Activated CD4-positive, alpha-beta T cell treated with anti-CD3 and anti-CD28 coated beads for 36 hours (primary cell): ENCODE measurements at regions of chr7 and their contacts with region 1.

Region 1: DNA sequence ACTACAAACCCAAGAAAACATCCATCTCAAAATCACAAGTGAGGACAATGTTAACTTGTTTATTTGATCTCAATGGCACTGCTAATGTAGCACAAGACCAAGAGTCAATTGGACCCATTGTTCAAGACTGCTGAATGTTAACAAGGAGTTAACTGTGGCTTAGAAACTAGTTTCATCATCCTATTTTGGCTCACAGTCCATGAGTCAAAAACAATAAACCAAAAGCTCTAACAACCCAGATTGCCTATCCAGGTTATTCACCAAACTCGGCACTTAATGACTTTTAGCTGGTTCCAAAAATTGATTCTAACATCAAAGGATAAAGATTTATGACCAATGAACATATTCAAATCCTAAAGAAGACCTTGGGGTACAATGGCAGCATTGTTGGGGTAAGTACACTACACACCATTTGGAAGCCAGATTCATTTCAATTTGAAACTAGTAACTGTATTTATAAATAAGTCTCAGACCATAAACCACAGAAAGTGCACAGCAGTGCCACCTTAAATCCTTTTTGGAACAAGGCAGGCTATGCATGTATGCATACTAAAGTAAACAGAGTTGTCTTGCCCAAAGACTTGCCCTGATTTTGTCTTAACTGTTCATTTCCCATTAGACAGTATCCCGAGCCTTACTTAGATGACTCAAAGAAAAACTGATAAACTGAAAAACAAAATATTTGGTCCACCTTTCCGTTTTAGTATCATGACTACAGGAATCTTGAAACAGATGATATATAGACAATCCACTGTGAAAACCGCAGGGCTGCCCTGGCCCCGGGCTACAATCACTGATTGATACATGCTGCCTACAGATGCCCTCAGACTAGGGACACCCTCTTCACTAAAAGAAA is 84.5 kb downstream of the SRPK2 start:
- DNase-seq: peak; percentile 37
- ATAC-seq: peak; percentile 31
- H3K4me3 Mint-ChIP-seq: no peak overlapping the region
- H3K27ac Mint-ChIP-seq: peak overlapping the region; percentile 40
- H3K4me1 Mint-ChIP-seq: peaks cover 70% of the 10 kb centered on the region
- H3K27me3 Mint-ChIP-seq: no peaks in the 10 kb centered on the region

Region 2: DNA sequence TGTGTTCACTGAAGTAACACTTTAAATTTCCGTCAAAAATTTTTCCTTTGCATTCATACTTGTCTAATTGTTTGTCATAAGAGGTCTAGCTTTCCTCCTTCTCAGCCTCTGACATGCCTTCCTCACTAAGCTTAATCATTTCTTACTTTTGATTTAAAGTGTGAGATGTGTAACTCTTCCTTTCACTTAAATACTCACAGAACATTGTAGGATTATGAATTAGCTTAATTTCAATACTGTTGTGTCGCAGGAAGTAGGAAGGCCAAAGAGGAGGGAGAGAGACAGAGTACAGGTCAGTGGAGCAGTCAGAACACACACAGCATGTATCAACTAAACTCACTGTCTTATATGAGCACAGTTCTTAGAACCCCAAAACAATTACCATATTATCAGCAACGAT is 14.6 kb before region 1 on chr7:
- CTCF ChIA-PET with region 1: no interaction called
- POLR2A ChIA-PET with region 1: no interaction called
- intact Hi-C with region 1: loop called in 1 of 2 experiments (anchors 2 kb)
- DNase-seq: peak; percentile 30
- ATAC-seq: peak; percentile 95
- H3K4me3 Mint-ChIP-seq: peak overlapping the region; percentile 6
- H3K27ac Mint-ChIP-seq: peak overlapping the region; percentile 73
- H3K4me1 Mint-ChIP-seq: peaks cover 25% of the 10 kb centered on the region
- H3K27me3 Mint-ChIP-seq: no peaks in the 10 kb centered on the region